Transverse colon (tissue), 4 donors: ENCODE measurements at regions of chr19 and their contacts with region 1.

Region 1: DNA sequence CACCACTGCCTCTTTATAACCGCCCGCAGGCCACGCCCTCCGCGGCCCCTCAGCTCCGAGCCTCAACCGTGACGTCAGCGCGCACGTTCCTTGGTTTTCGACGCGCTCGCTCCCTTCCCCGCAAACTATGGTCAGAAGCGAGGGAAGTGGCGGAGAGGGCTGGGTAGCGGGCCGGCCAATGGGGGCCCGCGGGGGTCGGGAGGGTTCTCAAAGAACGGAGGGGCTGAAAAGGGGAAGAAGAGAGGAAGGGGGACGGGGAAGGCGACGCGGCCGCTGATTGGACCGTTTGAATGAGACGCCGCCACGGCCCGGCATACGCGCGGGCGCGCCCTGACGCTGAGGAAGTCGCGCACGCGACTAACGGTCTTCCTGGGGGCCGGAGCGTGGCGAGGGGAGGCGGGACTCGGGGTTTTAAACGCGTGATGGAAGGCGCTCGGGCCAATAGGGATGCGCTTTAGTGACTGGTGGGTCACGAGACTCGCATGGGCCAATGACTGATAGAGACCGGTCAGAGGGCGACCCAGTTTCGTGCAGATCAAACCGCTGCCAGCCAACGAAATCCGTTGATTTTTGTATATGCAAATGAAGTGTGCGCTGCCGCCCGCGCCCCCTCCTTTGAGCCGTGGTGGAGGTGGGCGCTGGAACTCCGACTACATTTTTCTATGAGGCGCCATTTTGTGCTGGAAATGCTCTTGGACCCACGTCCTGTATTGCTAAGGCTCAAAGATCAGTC is 378 bp upstream of the UBE2S start:
- DNase-seq: peak; percentile 98
- H3K4me3 ChIP-seq: peak overlapping the region; percentile 97 to 100 (median 99)
- H3K27ac ChIP-seq: peak overlapping the region; percentile 97 to 100 (median 98)
- H3K4me1 ChIP-seq: peaks cover 0 to 27% (median 21%) of the 10 kb centered on the region in 4 donors
- H3K27me3 ChIP-seq: no peaks in the 10 kb centered on the region
- CTCF ChIP-seq: no peak
- EP300 ChIP-seq: no peak
- POLR2A ChIP-seq: peak; percentile 89

Region 2: GRCh38 chr19:55279770-55280643 is 128.0 kb before region 1 on chr19 and contains the start of gene HSPBP1:
- in situ Hi-C with region 1: loop called in 2 of 4 experiments (anchors 25 kb)
- intact Hi-C with region 1: no loop called
- DNase-seq: peak; percentile 98
- H3K4me3 ChIP-seq: peak within 1 kb of the TSS; percentile 58 to 80 (median 63)
- H3K27ac ChIP-seq: peak within 1 kb of the TSS; percentile 79 to 87 (median 84)
- H3K4me1 ChIP-seq: peaks cover 12 to 39% (median 16%) of the 10 kb centered on the region in 4 donors
- H3K27me3 ChIP-seq: peaks cover 18% of the 10 kb centered on the region
- CTCF ChIP-seq: no peak
- EP300 ChIP-seq: no peak
- POLR2A ChIP-seq: peak; percentile 38
- total RNA-seq, gene HSPBP1: 4.5 to 98.7 (median 27.0) TPM

Region 3: DNA sequence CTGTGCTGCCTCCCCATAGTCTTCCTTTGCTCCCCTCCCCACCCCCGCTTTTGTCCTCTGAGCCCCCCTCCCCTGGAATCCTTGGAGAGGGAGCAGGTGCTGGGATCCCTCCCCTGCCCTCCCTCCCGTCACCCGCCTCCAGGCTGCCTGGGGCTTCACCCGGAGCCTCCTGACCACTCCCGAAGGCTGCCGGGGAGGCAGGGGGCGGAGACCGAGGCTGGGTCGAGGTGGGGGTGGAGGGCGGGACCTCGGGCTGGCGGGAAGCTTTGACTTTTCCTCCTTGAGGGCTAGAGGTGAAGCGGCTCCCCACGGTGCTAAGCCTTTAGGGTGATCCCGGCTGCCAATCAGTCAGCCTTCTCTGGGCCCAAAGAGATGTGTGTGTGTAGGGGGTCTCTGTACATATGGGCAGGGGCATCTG is 66.8 kb before region 1 on chr19:
- in situ Hi-C with region 1: no loop called
- intact Hi-C with region 1: loop called (anchors 2 kb)
- DNase-seq: peak; percentile 87
- H3K4me3 ChIP-seq: peak overlapping the region; percentile 20 to 96 (median 81)
- H3K27ac ChIP-seq: peak overlapping the region; percentile 83 to 99 (median 96)
- H3K4me1 ChIP-seq: peaks cover 6 to 43% (median 27%) of the 10 kb centered on the region in 4 donors
- H3K27me3 ChIP-seq: no peaks in the 10 kb centered on the region
- CTCF ChIP-seq: no peak
- EP300 ChIP-seq: no peak
- POLR2A ChIP-seq: no peak